WTC11 (cell line): ENCODE measurements at regions of chr6 and their contacts with region 1.

Region 1: DNA sequence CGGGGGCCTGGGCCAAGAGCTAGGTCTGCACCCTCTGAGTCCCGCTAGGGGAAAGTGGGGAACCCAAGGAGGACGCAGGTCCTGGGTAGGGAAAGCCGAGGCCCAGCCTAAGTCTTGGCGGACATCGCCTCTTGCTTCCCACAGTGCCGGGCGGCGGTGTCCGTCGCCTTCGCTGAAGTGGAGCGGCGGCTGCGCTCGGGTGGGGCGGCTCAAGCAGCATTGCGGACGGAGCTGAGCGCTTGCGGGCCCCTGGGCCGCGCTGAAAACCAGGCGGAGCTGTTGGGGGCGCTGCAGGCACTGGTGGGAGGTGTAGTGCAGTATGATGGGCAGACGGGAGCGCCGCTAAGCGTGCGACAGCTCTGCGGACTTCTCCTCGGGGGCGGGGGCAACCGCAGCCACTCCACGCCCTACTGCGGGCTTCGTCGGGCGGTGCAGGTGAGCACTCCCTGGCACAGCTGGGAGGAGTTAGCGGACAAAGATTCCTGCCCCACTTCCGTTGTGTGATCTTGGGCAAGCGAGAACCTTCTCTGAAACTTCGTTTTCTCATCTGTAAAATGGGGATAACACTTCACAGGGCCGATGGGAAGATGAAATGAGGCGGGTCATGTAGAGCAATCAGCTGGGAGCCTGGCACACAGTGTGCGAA is 4.2 kb downstream of the PRSS16 start:
- DNase-seq: peak; percentile 97
- ATAC-seq: peak; percentile 88
- H3K4me3 Mint-ChIP-seq: peak overlapping the region; percentile 90
- H3K27ac Mint-ChIP-seq: peak overlapping the region; percentile 86
- H3K4me1 Mint-ChIP-seq: peaks cover 10% of the 10 kb centered on the region
- H3K27me3 Mint-ChIP-seq: no peaks in the 10 kb centered on the region; the same call in none of the 2 replicates
- CTCF ChIP-seq: no peak

Region 2: DNA sequence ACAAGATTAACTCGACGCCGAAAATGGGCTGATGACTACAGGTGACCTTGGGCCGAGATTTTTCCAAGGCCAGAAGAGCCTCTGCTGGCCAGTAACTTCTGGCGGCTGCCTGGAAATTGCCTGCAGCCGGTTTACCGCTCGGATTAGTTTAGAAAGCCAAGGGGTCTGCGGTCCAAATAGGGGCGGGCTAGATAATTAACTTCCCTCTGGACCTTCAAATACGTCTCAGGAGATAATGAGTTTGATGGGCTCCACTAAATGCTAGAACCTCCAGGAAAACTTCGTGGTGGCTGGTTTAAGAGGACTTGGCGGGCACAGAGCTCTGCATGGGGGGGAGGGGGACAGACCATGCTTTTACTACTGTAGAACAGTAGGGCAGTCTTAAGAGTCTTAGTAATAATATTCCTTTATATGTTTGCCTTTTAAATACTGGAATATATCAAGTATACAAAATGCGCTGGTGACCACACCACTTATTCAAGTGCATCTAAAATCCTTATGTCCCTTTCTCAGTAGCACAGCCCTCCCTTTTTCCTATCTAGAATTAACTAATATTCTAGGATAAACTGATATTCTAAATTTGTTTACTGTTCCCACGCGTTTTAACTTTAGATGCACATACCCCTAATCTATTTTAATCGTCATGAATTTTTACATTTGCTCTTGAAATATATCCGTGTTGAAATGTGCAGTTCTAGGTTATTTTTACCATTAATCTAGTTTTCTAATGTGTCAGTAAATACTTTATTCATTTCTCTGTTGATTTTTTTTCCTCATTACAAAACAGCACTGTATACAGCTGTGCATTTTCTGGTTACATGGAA is 111.8 kb before region 1 on chr6:
- CTCF ChIA-PET with region 1: no interaction called
- POLR2A ChIA-PET with region 1: no interaction called
- DNase-seq: no peak
- ATAC-seq: peak; percentile 12
- H3K4me3 Mint-ChIP-seq: peak overlapping the region; percentile 97
- H3K27ac Mint-ChIP-seq: peak overlapping the region; percentile 99
- H3K4me1 Mint-ChIP-seq: peaks cover 58% of the 10 kb centered on the region
- H3K27me3 Mint-ChIP-seq: no peaks in the 10 kb centered on the region
- CTCF ChIP-seq: no peak

Region 3: DNA sequence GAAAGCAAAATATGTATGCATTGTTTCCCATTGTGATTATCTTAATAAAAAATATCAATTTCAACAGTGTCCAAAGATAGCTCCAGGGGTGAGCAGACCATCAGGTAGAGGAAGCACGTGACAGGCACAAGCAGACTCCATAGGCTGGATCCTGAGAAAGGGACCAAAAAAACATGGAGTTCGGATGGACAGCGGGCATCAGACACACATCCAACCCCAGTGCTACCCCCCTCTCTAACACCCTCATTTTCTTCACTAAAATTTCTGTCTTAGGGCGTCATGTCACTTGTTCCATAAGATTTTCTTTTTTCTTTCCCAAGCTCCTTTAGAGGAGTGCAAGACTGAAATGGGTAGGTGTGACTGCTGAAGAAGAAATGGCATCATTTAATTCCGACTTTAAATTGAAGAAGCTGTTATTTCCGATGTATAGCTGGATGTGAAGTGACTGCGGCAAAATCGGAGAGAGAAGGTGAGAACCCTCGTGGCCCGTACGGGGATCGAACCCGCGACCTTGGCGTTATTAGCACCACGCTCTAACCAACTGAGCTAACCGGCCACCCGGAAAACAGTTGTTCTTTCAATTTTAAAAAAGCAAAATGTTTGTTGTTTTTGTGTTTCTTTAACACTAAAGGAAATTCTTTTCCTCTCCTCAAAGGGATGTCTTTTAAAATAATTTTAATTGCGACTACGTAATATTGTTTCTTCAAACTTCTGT is 14.5 kb before region 1 on chr6:
- CTCF ChIA-PET with region 1: interaction called, 25 read pairs
- POLR2A ChIA-PET with region 1: interaction called, 14 read pairs
- DNase-seq: peak; percentile 80
- ATAC-seq: peak; percentile 91
- H3K4me3 Mint-ChIP-seq: peak overlapping the region; percentile 85
- H3K27ac Mint-ChIP-seq: no peak overlapping the region; the same call in 1 of the 2 replicates
- H3K4me1 Mint-ChIP-seq: peaks cover 21% of the 10 kb centered on the region
- H3K27me3 Mint-ChIP-seq: peaks cover 27% of the 10 kb centered on the region
- CTCF ChIP-seq: no peak

Region 4: GRCh38 chr6:27280064-27280539 is 28.4 kb after region 1 on chr6:
- CTCF ChIA-PET with region 1: interaction called, 13 read pairs
- POLR2A ChIA-PET with region 1: interaction called, 3 read pairs
- DNase-seq: peak; percentile 67
- ATAC-seq: peak; percentile 80
- H3K4me3 Mint-ChIP-seq: peak overlapping the region; percentile 93
- H3K27ac Mint-ChIP-seq: no peak overlapping the region
- H3K4me1 Mint-ChIP-seq: peaks cover 7% of the 10 kb centered on the region; the same call in 1 of the 2 replicates
- H3K27me3 Mint-ChIP-seq: peaks cover 52% of the 10 kb centered on the region
- CTCF ChIP-seq: no peak

Region 5: DNA sequence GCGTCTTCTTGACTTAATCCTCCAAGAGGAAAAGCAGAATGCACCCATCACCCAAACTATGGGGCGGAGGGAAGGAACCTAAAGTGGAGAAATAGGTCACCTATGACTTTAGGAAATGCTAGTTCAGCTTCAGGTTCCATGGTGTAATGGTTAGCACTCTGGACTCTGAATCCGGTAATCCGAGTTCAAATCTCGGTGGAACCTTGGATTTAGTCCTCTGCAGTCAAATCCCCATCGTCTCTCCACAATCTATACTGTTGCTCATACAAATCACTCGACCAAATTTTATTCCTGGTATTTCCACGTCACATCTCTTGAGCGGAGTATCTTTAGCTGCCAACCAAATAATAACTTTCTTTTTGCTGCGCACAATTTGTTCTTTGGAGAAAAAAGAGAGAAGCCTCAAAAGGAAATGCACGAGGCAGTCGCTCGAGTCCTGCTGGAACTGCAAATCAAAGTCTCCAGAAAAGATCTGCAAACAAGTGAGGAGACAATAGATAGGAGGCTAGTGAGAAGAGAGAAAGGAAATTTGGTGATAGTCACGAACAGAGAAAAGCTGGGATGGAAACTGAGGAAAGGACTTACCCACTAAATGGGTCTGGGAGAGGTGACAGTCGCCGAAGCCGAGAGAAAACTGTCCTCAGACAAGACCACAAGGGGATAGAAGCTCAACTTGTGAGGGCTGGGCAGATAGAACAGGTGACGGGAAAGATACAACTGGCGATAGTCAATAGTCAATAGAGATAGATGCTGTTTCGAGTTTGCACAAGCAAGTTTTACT is 43.8 kb after region 1 on chr6:
- CTCF ChIA-PET with region 1: interaction called, 21 read pairs
- POLR2A ChIA-PET with region 1: interaction called, 6 read pairs
- DNase-seq: peak; percentile 41
- ATAC-seq: peak; percentile 46
- H3K4me3 Mint-ChIP-seq: peak overlapping the region; percentile 93
- H3K27ac Mint-ChIP-seq: no peak overlapping the region
- H3K4me1 Mint-ChIP-seq: peaks cover 35% of the 10 kb centered on the region
- H3K27me3 Mint-ChIP-seq: peaks cover 29% of the 10 kb centered on the region
- CTCF ChIP-seq: no peak